B cell (primary cell): ENCODE measurements at regions of chr4 and their contacts with region 1.

Region 1: DNA sequence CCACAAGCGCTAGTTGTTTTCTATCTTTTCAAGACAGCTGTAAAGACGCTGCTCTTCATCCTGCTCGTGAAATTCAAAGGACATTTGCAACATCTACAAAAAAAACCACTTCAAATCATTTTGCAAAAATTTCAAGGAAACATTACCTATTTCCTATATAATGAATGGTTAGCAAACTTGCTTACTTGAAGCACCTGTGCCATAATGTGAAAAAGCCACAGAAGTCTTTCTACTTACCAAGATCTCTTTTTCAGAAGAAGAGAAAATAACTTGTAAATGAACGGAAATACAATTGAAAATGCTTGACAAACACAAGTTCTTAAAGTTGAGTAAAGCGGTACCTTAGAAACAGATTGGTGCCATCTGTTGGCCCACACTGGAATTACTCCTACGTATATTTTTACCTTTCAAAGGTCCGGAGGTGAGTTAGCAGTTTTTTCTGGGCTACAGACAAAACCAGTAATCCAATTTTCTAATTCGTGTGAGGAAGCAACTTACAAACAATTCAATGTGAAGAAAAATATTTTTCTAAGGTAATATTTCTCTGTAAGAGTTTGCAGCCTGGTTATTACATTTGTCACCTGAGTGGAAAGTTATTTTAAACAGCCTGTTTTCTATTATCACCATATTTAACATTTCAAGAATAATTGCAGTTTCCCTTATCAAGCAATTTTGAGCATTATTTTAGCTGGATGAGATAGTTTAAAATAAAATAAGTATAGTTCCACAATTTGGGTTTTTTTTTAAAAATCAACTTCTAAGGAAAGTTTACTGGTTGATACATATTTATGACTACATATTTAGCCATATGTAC is at the start of gene TLR6:
- DNase-seq: peak; percentile 87
- ATAC-seq: peak; percentile 56
- H3K4me3 ChIP-seq: peak within 1 kb of the TSS; percentile 51 to 78 (median 70)
- H3K4me3 Mint-ChIP-seq: peak within 1 kb of the TSS; percentile 93
- H3K27ac ChIP-seq: peak within 1 kb of the TSS; percentile 73 to 77
- H3K27ac Mint-ChIP-seq: peak within 1 kb of the TSS; percentile 94
- H3K4me1 ChIP-seq: peaks cover 39 to 43% of the 10 kb centered on the region in 2 donors
- H3K4me1 Mint-ChIP-seq: peaks cover 52% of the 10 kb centered on the region
- H3K27me3 ChIP-seq: no peaks in the 10 kb centered on the region
- H3K27me3 Mint-ChIP-seq: no peaks in the 10 kb centered on the region
- CTCF ChIP-seq: peak; percentile 87
- total RNA-seq, gene TLR6: 54.4 and 60.6 TPM in 2 replicates

Region 2: GRCh38 chr4:38062088-38062893 is 794.4 kb before region 1 on chr4:
- CTCF ChIA-PET with region 1: no interaction called
- POLR2A ChIA-PET with region 1: no interaction called
- intact Hi-C with region 1: loop called (anchors 5 kb)
- DNase-seq: peak; percentile 65
- ATAC-seq: peak; percentile 62
- H3K4me3 ChIP-seq: no peak overlapping the region
- H3K4me3 Mint-ChIP-seq: peak overlapping the region; percentile 51
- H3K27ac ChIP-seq: no peak overlapping the region
- H3K27ac Mint-ChIP-seq: peak overlapping the region; percentile 42
- H3K4me1 ChIP-seq: peaks cover 0 to 5% of the 10 kb centered on the region in 2 donors
- H3K4me1 Mint-ChIP-seq: peaks cover 15% of the 10 kb centered on the region
- H3K27me3 ChIP-seq: no peaks in the 10 kb centered on the region
- H3K27me3 Mint-ChIP-seq: no peaks in the 10 kb centered on the region
- CTCF ChIP-seq: peak; percentile 93

Region 3: DNA sequence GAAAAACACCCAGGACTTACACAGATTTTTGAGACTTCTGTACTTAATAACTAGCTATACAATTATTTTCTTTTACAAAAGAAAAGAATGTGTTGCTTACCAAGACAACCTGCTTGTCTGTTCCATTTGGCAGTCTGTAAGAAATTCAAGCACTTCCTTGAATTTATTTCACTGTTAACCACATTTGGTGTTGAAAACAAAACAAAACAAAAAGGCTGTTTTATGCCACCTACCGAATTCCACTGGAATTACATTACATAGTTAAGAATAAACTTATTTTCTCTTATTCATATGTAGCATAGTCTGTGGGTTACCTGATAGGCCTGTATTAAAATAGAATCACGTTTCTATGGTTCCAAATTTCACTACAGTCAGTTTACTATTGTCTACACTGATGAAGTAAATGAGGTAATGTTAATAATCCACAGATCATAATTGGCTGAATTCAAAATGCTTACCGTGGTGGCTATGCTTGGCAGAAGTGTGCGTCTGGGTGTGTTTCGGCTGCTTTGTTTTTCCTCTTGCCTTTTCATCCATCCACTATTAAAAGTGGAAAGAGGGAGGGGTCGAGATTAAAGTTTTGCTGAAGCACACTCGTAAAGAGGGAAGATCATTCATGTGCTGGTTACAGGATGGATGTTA is 52.0 kb before region 1 on chr4 and contains the start of gene TLR1:
- CTCF ChIA-PET with region 1: interaction called, 48 read pairs
- POLR2A ChIA-PET with region 1: interaction called, 12 read pairs
- intact Hi-C with region 1: loop called (anchors 1 kb)
- DNase-seq: peak; percentile 85
- ATAC-seq: peak; percentile 52
- H3K4me3 ChIP-seq: peak within 1 kb of the TSS; percentile 57 to 97 (median 70)
- H3K4me3 Mint-ChIP-seq: peak within 1 kb of the TSS; percentile 80
- H3K27ac ChIP-seq: peak within 1 kb of the TSS; percentile 72 to 97
- H3K27ac Mint-ChIP-seq: peak within 1 kb of the TSS; percentile 95
- H3K4me1 ChIP-seq: peaks cover 32 to 45% of the 10 kb centered on the region in 2 donors
- H3K4me1 Mint-ChIP-seq: peaks cover 56% of the 10 kb centered on the region
- H3K27me3 ChIP-seq: no peaks in the 10 kb centered on the region
- H3K27me3 Mint-ChIP-seq: no peaks in the 10 kb centered on the region
- CTCF ChIP-seq: peak; percentile 75
- total RNA-seq, gene TLR1: 50.8 and 54.1 TPM in 2 replicates

Region 4: GRCh38 chr4:38815885-38816782 is 40.6 kb before region 1 on chr4:
- CTCF ChIA-PET with region 1: interaction called, 9 read pairs
- POLR2A ChIA-PET with region 1: interaction called, 8 read pairs
- intact Hi-C with region 1: loop called (anchors 1 kb)
- DNase-seq: peak; percentile 88
- ATAC-seq: peak; percentile 87
- H3K4me3 ChIP-seq: peak overlapping the region in 3 of 5 experiments; percentile 5 to 53 (median 16)
- H3K4me3 Mint-ChIP-seq: peak overlapping the region; percentile 63
- H3K27ac ChIP-seq: peak overlapping the region; percentile 93 to 96
- H3K27ac Mint-ChIP-seq: peak overlapping the region; percentile 94
- H3K4me1 ChIP-seq: peaks cover 53 to 58% of the 10 kb centered on the region in 2 donors
- H3K4me1 Mint-ChIP-seq: peaks cover 60% of the 10 kb centered on the region
- H3K27me3 ChIP-seq: no peaks in the 10 kb centered on the region
- H3K27me3 Mint-ChIP-seq: no peaks in the 10 kb centered on the region
- CTCF ChIP-seq: no peak

Region 5: DNA sequence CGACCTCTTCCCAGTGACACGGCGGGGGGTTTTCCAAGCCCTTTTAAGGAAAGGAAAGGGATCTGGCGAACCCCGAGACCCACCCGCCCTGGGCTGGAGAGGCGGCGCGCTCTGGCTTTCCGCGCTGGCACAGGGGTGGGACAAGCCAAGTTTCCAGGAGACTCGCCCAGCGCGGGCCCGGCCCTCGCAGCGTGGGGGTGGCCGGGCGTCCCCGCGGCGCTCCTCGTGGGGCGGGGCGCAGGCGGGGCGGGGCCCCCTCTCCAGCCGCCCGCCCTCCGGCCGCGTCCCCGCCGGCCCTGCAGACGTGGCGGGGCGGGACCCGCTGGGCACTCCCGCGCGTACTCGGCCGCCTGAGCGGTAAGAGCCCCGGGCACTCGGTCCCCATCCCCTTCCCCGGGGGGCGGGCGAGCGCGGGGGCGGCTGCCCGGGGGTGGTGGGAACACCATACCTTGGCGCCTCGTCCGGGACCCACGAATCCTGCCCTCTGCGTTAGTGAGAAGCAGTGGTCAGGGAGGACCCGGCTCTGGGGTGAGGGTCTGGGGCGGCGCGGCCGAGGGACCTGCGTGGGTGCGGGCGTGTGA is 10.8 kb after region 1 on chr4 and contains the start of gene FAM114A1:
- CTCF ChIA-PET with region 1: interaction called, 27 read pairs
- POLR2A ChIA-PET with region 1: interaction called, 4 read pairs
- intact Hi-C with region 1: no loop called
- DNase-seq: peak; percentile 54
- ATAC-seq: peak; percentile 99
- H3K4me3 ChIP-seq: peak within 1 kb of the TSS; percentile 50 to 63 (median 60)
- H3K4me3 Mint-ChIP-seq: peak within 1 kb of the TSS; percentile 89
- H3K27ac ChIP-seq: peak within 1 kb of the TSS in 1 of 2 donors; percentile 54
- H3K27ac Mint-ChIP-seq: peak within 1 kb of the TSS; percentile 60
- H3K4me1 ChIP-seq: peaks cover 10 to 12% of the 10 kb centered on the region in 2 donors
- H3K4me1 Mint-ChIP-seq: peaks cover 11% of the 10 kb centered on the region
- H3K27me3 ChIP-seq: no peaks in the 10 kb centered on the region
- H3K27me3 Mint-ChIP-seq: no peaks in the 10 kb centered on the region
- CTCF ChIP-seq: no peak
- total RNA-seq, gene FAM114A1: 2.2 and 2.9 TPM in 2 replicates

Region 6: GRCh38 chr4:38872604-38873006 is 15.9 kb after region 1 on chr4:
- CTCF ChIA-PET with region 1: interaction called, 27 read pairs
- POLR2A ChIA-PET with region 1: no interaction called
- intact Hi-C with region 1: no loop called
- DNase-seq: no peak
- ATAC-seq: no peak
- H3K4me3 ChIP-seq: no peak overlapping the region
- H3K4me3 Mint-ChIP-seq: no peak overlapping the region
- H3K27ac ChIP-seq: no peak overlapping the region
- H3K27ac Mint-ChIP-seq: no peak overlapping the region
- H3K4me1 ChIP-seq: peaks cover 4 to 7% of the 10 kb centered on the region in 2 donors
- H3K4me1 Mint-ChIP-seq: peaks cover 7% of the 10 kb centered on the region
- H3K27me3 ChIP-seq: no peaks in the 10 kb centered on the region
- H3K27me3 Mint-ChIP-seq: no peaks in the 10 kb centered on the region
- CTCF ChIP-seq: no peak

Region 7: GRCh38 chr4:38914854-38915253 is 58.1 kb after region 1 on chr4:
- CTCF ChIA-PET with region 1: no interaction called
- POLR2A ChIA-PET with region 1: no interaction called
- intact Hi-C with region 1: no loop called
- DNase-seq: peak; percentile 17
- ATAC-seq: no peak
- H3K4me3 ChIP-seq: peak overlapping the region in 1 of 5 experiments; percentile 15
- H3K4me3 Mint-ChIP-seq: peak overlapping the region; percentile 6
- H3K27ac ChIP-seq: no peak overlapping the region
- H3K27ac Mint-ChIP-seq: peak overlapping the region; percentile 38
- H3K4me1 ChIP-seq: peaks cover 6 to 7% of the 10 kb centered on the region in 2 donors
- H3K4me1 Mint-ChIP-seq: peaks cover 7% of the 10 kb centered on the region
- H3K27me3 ChIP-seq: no peaks in the 10 kb centered on the region
- H3K27me3 Mint-ChIP-seq: no peaks in the 10 kb centered on the region
- CTCF ChIP-seq: no peak

Region 8: DNA sequence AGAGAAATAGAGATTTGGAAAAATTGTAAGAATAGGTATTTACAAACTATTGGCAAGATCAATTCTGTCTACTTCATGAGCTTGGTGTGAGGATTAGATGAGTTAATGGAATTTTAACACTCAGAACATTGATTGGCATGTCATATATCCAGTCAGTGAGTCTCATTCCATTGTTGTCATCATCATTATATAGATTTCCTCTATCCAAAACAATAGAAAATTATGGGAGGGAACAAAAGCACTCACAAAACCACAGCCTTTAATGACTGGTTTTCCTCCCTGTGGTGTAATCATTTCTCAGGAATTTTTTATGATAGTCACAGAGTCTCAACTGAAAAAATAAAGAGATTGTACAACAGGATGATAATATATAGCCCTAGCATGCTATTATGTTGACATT is 226.4 kb after region 1 on chr4:
- CTCF ChIA-PET with region 1: no interaction called
- POLR2A ChIA-PET with region 1: no interaction called
- intact Hi-C with region 1: no loop called
- DNase-seq: no peak
- ATAC-seq: no peak
- H3K4me3 ChIP-seq: no peak overlapping the region
- H3K4me3 Mint-ChIP-seq: no peak overlapping the region
- H3K27ac ChIP-seq: no peak overlapping the region
- H3K27ac Mint-ChIP-seq: no peak overlapping the region
- H3K4me1 ChIP-seq: no peaks in the 10 kb centered on the region
- H3K4me1 Mint-ChIP-seq: no peaks in the 10 kb centered on the region
- H3K27me3 ChIP-seq: no peaks in the 10 kb centered on the region
- H3K27me3 Mint-ChIP-seq: no peaks in the 10 kb centered on the region
- CTCF ChIP-seq: no peak